A673 (cell line): ENCODE measurements at regions of chr10 and their contacts with region 1.

Region 1: GRCh38 chr10:110311357-110311949 is 6.7 kb upstream of the SMNDC1 start:
- DNase-seq: peak; percentile 86
- H3K4me3 ChIP-seq: no peak overlapping the region
- H3K27ac ChIP-seq: peak overlapping the region; percentile 25
- H3K4me1 ChIP-seq: peaks cover 56% of the 10 kb centered on the region
- H3K27me3 ChIP-seq: no peaks in the 10 kb centered on the region
- CTCF ChIP-seq: peak; percentile 75

Region 2: GRCh38 chr10:110547139-110547761 is 235.8 kb after region 1 on chr10:
- CTCF ChIA-PET with region 1: interaction called, 4 read pairs
- POLR2A ChIA-PET with region 1: no interaction called
- intact Hi-C with region 1: loop called (anchors 2 kb)
- DNase-seq: peak; percentile 86
- H3K4me3 ChIP-seq: no peak overlapping the region
- H3K27ac ChIP-seq: no peak overlapping the region
- H3K4me1 ChIP-seq: peaks cover 5% of the 10 kb centered on the region
- H3K27me3 ChIP-seq: no peaks in the 10 kb centered on the region
- CTCF ChIP-seq: peak; percentile 87

Region 3: DNA sequence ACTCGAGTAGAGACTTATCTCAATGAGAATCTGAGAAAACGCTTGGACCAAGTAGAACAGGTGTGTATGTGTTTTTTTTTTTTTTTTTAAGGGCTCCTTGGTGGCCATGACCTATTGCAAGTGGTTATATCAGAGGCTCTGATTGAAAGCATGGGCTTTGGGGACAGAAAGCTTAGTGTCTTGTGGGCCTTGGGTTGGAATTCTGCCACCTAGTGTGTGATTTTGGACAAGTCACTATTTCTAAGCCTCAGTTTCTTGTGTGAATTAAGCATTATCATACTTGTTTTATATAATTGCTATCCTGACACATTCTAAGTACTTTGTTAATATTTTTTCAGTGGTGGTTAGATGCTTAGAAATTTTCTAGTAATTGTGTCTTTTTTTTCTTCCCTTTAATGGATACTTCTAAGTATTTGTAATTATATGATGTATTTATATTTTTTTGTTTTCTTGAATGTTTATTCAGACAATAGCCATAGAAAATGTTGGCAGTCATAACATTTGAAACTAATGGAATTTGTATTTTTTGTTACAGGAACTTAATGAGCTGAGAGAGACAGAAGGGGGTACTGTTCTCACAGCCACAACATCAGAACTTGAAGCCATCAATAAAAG is 289.1 kb after region 1 on chr10:
- CTCF ChIA-PET with region 1: interaction called, 3 read pairs
- POLR2A ChIA-PET with region 1: no interaction called
- intact Hi-C with region 1: loop called (anchors 1 kb)
- DNase-seq: peak; percentile 82
- H3K4me3 ChIP-seq: no peak overlapping the region
- H3K27ac ChIP-seq: no peak overlapping the region
- H3K4me1 ChIP-seq: no peaks in the 10 kb centered on the region
- H3K27me3 ChIP-seq: no peaks in the 10 kb centered on the region
- CTCF ChIP-seq: peak; percentile 74

Region 4: GRCh38 chr10:110610308-110610774 is 298.9 kb after region 1 on chr10:
- CTCF ChIA-PET with region 1: no interaction called
- POLR2A ChIA-PET with region 1: no interaction called
- intact Hi-C with region 1: loop called (anchors 2 kb)
- DNase-seq: peak; percentile 78
- H3K4me3 ChIP-seq: no peak overlapping the region
- H3K27ac ChIP-seq: no peak overlapping the region
- H3K4me1 ChIP-seq: peaks cover 15% of the 10 kb centered on the region
- H3K27me3 ChIP-seq: no peaks in the 10 kb centered on the region
- CTCF ChIP-seq: peak; percentile 88

Region 5: GRCh38 chr10:110681023-110681681 is 369.7 kb after region 1 on chr10:
- CTCF ChIA-PET with region 1: no interaction called
- POLR2A ChIA-PET with region 1: no interaction called
- intact Hi-C with region 1: loop called (anchors 2 kb)
- DNase-seq: peak; percentile 77
- H3K4me3 ChIP-seq: no peak overlapping the region
- H3K27ac ChIP-seq: no peak overlapping the region
- H3K4me1 ChIP-seq: peaks cover 2% of the 10 kb centered on the region
- H3K27me3 ChIP-seq: no peaks in the 10 kb centered on the region
- CTCF ChIP-seq: peak; percentile 84

Region 6: DNA sequence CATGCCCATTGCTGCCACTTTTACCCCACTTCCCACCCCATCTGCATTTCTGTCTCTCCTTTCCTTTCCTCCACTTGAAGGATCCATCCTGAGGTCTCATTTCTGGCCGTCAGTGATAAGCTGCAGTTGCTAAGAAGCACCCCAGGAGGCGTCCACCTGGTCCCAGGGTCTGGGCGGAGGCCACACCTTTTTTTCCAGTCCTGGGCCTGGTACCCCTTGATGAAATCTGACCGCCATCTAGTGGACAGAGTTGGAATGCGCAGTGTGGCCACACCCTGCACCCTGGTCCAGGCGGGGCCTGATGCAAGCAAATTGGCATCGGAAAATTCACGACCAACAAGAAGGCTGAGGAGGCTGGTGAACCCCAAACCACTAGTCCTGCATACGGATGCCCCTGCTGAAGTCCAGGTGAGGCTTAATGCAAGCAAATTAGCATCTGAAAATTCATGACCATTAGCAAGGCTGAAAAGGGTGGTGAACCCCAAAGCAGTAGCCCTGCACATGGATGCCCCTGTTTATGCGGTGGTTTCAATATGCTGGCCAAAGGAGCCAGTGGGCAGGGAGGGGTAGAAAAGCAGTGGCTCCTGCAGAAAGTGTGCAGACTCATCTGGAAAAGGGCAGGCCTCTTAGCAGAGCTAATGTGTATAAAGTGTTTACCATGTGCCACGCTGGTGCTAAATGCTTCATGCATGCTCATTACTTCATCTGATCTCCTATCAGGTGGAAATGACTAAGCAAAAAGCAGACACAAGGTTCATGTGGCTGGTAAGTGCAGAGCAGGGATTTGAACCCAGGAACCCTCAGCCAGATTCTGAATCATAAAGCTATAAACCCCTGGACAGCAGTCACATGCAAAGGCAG is 1828.9 kb after region 1 on chr10:
- CTCF ChIA-PET with region 1: no interaction called
- POLR2A ChIA-PET with region 1: no interaction called
- intact Hi-C with region 1: loop called (anchors 2 kb)
- DNase-seq: peak; percentile 80
- H3K4me3 ChIP-seq: no peak overlapping the region
- H3K27ac ChIP-seq: no peak overlapping the region
- H3K4me1 ChIP-seq: no peaks in the 10 kb centered on the region
- H3K27me3 ChIP-seq: no peaks in the 10 kb centered on the region
- CTCF ChIP-seq: peak; percentile 93